Activated CD4-positive, alpha-beta T cell treated with anti-CD3 and anti-CD28 coated beads for 36 hours (primary cell): ENCODE measurements at regions of chr2 and their contacts with region 1.

Region 1: GRCh38 chr2:47767880-47768609 is 14.9 kb upstream of the MSH6 start:
- DNase-seq: peak; percentile 82
- ATAC-seq: peak; percentile 94
- H3K4me3 Mint-ChIP-seq: no peak overlapping the region
- H3K27ac Mint-ChIP-seq: no peak overlapping the region
- H3K4me1 Mint-ChIP-seq: peaks cover 2% of the 10 kb centered on the region
- H3K27me3 Mint-ChIP-seq: no peaks in the 10 kb centered on the region

Region 2: DNA sequence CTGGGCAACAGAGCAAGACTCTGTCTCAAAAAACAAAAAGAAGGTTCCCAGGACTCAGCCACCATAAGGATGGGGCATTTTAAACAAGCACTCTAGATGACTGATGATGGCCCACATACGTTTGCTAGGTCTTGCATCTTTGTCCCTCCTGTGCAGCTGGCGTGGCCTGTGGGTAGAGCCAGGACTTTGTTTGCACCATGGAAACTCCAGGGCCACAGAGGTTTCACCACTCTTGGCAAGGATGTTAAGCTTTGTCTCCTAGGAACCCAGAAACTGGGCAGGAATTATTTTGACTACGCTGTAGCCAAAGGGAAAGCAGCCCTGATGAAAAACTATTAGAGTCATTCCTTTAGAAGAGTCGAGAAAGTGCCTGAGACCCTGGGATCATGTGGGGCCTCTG is 537.6 kb before region 1 on chr2:
- CTCF ChIA-PET with region 1: no interaction called
- POLR2A ChIA-PET with region 1: no interaction called
- intact Hi-C with region 1: no loop called
- DNase-seq: no peak
- ATAC-seq: no peak
- H3K4me3 Mint-ChIP-seq: no peak overlapping the region
- H3K27ac Mint-ChIP-seq: no peak overlapping the region
- H3K4me1 Mint-ChIP-seq: no peaks in the 10 kb centered on the region
- H3K27me3 Mint-ChIP-seq: peaks cover 1% of the 10 kb centered on the region

Region 3: GRCh38 chr2:47334356-47335136 is 433.5 kb before region 1 on chr2:
- CTCF ChIA-PET with region 1: interaction called, 26 read pairs
- POLR2A ChIA-PET with region 1: no interaction called
- intact Hi-C with region 1: loop called (anchors 1 to 2 kb)
- DNase-seq: no peak
- ATAC-seq: no peak
- H3K4me3 Mint-ChIP-seq: no peak overlapping the region
- H3K27ac Mint-ChIP-seq: no peak overlapping the region
- H3K4me1 Mint-ChIP-seq: no peaks in the 10 kb centered on the region
- H3K27me3 Mint-ChIP-seq: peaks cover 3% of the 10 kb centered on the region

Region 4: DNA sequence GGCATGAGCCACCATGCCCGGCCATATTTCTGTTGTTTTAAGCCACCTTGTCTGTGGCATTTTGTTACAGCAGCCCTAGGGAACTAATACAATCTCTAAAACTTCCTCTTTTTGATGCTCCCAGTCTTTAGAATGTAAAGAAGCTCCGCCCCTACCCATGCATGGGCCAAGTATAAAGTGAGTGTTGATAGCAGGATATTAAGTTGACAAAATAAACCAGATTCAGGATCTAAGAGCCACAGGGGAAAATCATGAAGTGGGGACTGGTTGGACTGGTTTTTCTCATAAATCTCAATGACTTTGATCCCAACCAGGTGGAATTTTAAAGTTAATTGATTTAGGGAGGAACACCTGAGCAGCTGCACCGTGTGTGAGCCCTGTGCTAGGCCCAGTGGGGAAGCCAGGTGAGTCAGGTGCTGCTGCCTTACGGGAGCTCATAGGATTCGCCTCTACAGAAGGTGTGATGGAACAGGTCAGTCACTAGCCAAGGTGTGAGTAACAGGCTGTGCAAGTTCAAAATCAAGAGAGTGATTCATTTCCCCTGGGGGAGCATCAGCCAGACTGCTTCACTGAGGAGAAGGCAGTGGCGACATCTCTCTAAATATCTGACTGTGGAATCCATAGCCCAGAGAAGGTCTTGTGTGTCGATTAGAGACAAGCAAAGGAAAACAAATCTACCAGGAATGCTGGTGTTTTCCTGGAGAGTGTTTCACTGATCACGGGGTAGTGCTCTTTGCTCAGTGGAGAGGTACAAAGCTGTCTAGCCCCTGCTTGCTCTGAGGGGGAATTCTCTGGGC is 428.1 kb before region 1 on chr2:
- CTCF ChIA-PET with region 1: interaction called, 26 read pairs
- POLR2A ChIA-PET with region 1: no interaction called
- intact Hi-C with region 1: loop called (anchors 1 to 2 kb)
- DNase-seq: peak; percentile 59
- ATAC-seq: peak; percentile 96
- H3K4me3 Mint-ChIP-seq: no peak overlapping the region
- H3K27ac Mint-ChIP-seq: no peak overlapping the region
- H3K4me1 Mint-ChIP-seq: peaks cover 8% of the 10 kb centered on the region
- H3K27me3 Mint-ChIP-seq: peaks cover 8% of the 10 kb centered on the region

Region 5: GRCh38 chr2:47388888-47389287 is 379.2 kb before region 1 on chr2:
- CTCF ChIA-PET with region 1: interaction called, 5 read pairs
- POLR2A ChIA-PET with region 1: no interaction called
- intact Hi-C with region 1: loop called in 1 of 2 experiments (anchors 5 kb)
- DNase-seq: no peak
- ATAC-seq: no peak
- H3K4me3 Mint-ChIP-seq: no peak overlapping the region
- H3K27ac Mint-ChIP-seq: no peak overlapping the region
- H3K4me1 Mint-ChIP-seq: no peaks in the 10 kb centered on the region
- H3K27me3 Mint-ChIP-seq: peaks cover 10% of the 10 kb centered on the region

Region 6: DNA sequence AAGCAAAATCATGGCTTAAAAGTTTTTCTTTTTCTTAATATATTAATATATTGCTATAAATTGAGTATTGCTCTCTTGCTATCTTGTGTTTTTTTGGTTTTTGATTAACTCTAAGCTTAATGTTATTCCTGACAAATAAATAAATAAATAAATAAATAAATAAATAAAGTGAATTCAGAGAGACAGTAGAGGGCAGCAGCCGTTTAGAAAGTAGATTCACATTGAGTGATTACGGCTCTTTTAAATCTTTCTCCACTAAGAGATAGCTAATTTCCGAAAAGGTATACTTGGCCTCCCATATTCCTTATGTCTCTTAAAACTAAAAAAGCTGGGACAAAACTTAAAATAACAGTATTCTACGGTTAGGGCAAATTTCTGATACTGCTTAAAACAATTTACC is 330.8 kb before region 1 on chr2:
- CTCF ChIA-PET with region 1: interaction called, 13 read pairs
- POLR2A ChIA-PET with region 1: no interaction called
- intact Hi-C with region 1: loop called in 1 of 2 experiments (anchors 5 kb)
- DNase-seq: no peak
- ATAC-seq: no peak
- H3K4me3 Mint-ChIP-seq: no peak overlapping the region
- H3K27ac Mint-ChIP-seq: no peak overlapping the region
- H3K4me1 Mint-ChIP-seq: no peaks in the 10 kb centered on the region
- H3K27me3 Mint-ChIP-seq: no peaks in the 10 kb centered on the region

Region 7: DNA sequence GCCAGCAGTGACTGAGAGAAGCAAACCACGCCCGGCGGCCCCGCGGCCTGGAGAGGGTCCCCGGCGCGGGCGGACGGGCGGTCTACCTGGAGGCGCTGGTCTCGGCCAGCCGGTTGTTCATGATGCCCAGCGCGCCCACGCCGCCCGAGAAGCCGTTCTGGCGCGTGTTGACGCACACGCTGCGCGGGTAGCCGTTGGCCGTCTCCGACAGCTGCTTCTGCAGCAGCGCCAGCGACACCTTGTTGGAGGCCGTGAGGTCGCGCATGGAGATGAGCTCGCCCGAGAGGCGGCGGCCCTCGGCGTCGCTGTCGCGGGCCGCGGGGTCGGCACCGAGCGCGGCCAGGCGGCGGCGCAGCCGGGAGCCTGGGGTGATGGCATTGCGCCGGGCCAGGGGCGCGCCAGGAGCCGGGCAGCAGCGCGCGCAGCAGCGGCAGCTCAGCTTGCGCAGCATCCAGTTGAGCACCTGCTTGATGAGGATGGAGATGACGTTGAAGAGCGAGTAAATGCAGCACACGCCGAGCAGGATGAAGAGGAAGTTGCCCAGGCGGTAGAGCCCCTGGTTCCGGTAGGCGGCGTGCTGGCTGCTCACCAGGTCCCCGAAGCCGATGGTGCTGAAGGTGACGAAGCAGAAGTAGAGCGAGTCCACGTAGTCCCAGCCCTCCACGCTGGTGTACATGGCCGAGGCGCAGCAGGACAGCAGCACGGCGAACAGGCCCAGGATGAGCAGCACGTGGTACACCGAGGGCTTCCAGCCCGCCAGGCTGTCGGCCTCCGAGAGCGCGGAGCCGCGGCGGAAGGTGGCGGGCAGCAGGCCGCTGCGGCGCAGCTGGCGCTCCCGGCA is 247.0 kb before region 1 on chr2:
- CTCF ChIA-PET with region 1: interaction called, 6 read pairs
- POLR2A ChIA-PET with region 1: no interaction called
- intact Hi-C with region 1: loop called (anchors 5 to 10 kb)
- DNase-seq: peak; percentile 87
- ATAC-seq: peak; percentile 87
- H3K4me3 Mint-ChIP-seq: peak overlapping the region; percentile 83
- H3K27ac Mint-ChIP-seq: peak overlapping the region; percentile 92
- H3K4me1 Mint-ChIP-seq: peaks cover 16% of the 10 kb centered on the region
- H3K27me3 Mint-ChIP-seq: no peaks in the 10 kb centered on the region

Region 8: DNA sequence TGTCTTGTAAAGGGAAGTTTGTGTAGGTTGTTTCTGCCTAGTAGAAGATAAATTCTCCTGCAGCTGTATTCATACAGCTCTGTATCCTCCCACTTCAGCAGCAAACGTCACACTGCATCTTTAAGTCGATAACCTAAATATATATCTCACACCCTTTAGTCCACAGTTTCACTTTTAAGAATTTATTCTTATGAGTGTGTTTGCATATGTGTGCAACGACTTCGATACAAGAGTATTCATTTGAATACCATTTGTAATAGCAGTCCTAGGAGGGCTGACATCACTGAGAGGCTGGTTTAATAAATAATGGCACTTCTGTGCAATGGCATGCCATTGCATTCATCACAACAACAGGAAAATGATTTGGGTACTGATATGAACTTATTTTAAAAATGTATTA is 48.9 kb before region 1 on chr2:
- CTCF ChIA-PET with region 1: interaction called, 6 read pairs
- POLR2A ChIA-PET with region 1: interaction called, 3 read pairs
- intact Hi-C with region 1: loop called in 1 of 2 experiments (anchors 5 kb)
- DNase-seq: no peak
- ATAC-seq: peak; percentile 65
- H3K4me3 Mint-ChIP-seq: no peak overlapping the region
- H3K27ac Mint-ChIP-seq: no peak overlapping the region
- H3K4me1 Mint-ChIP-seq: no peaks in the 10 kb centered on the region
- H3K27me3 Mint-ChIP-seq: no peaks in the 10 kb centered on the region

Region 9: GRCh38 chr2:48107326-48107925 is 339.4 kb after region 1 on chr2:
- CTCF ChIA-PET with region 1: no interaction called
- POLR2A ChIA-PET with region 1: no interaction called
- intact Hi-C with region 1: no loop called
- DNase-seq: no peak
- ATAC-seq: no peak
- H3K4me3 Mint-ChIP-seq: no peak overlapping the region
- H3K27ac Mint-ChIP-seq: no peak overlapping the region
- H3K4me1 Mint-ChIP-seq: peaks cover 17% of the 10 kb centered on the region
- H3K27me3 Mint-ChIP-seq: no peaks in the 10 kb centered on the region